Right ventricle myocardium superior (tissue), 1 donor: ENCODE measurements at regions of chr16 and their contacts with region 1.

Region 1: DNA sequence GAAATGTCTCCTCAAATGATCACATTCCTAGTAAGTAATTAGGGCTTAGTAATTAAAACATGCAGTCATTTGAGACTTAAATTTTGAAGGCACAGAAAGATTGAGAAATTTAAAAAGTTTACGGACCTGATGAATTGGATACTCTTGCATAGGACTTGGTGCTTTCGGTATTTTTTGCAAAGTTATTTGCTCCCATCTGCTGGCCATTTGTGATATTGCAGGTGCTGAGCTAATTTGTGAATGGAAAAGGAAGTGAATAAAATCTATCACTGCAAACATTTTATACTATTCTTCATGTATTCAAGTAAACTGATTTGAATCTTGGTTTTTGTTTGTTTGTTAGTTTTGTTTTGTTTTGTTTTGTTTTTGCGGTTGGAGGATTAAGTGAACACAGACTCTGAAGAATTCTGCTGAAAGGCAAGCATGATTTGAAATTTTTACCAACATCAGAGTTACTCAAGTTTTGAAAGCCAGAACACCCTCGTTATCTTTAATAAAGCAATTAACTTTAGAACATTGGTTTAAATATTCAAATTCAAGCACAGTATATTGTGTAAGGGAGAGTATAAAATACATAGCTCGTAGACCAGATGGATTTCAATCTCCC is 689.5 kb upstream of the RBFOX1 start:
- DNase-seq: no peak
- ATAC-seq: no peak

Region 2: DNA sequence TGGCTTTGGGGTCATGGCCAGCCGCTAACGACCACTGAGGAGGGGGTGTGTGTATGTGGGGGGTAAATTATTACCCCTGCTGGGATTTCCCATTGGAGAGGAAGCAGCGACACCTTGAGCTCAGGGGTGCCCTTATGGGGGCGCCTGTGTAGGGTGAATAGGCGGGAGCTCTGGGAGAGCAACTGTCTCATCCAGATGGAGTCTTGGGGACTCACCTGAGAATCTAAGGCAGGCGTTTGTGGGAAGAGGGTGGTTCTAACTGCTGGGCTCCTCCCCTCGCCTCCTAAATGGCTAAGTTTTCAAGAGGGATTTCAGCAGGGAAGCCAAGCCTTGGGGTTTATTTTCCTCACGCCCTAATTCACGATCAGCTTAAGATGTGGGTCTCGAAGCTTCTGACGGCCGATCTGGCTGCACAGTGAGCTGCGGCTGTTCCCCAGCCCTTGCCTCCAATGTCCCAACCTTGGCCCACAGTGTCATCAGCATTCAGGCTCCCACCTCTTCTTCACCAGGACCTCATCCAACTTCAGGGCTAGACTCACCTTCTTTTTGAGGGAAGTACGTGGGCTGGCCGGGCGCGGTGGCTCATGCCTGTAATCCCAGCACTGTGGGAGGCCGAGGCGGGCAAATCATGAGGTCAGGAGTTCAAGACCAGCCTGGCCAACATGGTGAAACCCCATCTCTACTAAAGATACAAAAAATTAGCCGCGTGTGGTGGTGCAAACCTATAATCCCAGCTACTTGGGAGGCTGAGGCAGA is 1408.7 kb before region 1 on chr16:
- intact Hi-C with region 1: loop called (anchors 10 kb)
- DNase-seq: no peak
- ATAC-seq: no peak

Region 3: DNA sequence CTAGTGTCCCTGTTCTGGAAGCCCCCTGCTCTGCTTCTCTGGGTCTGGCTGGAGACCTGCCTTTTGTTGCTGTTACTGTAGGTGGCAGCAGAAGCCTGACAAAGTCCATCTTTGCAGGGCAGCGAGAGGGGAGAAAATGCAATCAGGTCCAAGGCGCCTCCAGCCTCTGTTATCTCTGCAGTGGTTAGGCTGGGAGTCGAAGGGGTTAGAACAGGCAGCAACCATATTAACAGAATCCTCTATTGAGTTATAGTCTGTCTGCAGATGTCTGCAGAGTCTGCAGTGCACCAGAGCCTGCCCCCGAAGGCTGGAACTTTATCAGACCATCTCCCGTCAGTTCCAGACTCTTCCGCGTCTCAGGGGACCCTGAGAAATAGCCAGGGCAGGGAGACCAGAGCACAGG is 1140.7 kb before region 1 on chr16:
- intact Hi-C with region 1: loop called (anchors 5 kb)
- DNase-seq: no peak
- ATAC-seq: no peak

Region 4: GRCh38 chr16:6722786-6723185 is 79.6 kb after region 1 on chr16:
- intact Hi-C with region 1: no loop called
- DNase-seq: no peak
- ATAC-seq: no peak